A673 (cell line): ENCODE measurements at regions of chr6 and their contacts with region 1.

Region 1: DNA sequence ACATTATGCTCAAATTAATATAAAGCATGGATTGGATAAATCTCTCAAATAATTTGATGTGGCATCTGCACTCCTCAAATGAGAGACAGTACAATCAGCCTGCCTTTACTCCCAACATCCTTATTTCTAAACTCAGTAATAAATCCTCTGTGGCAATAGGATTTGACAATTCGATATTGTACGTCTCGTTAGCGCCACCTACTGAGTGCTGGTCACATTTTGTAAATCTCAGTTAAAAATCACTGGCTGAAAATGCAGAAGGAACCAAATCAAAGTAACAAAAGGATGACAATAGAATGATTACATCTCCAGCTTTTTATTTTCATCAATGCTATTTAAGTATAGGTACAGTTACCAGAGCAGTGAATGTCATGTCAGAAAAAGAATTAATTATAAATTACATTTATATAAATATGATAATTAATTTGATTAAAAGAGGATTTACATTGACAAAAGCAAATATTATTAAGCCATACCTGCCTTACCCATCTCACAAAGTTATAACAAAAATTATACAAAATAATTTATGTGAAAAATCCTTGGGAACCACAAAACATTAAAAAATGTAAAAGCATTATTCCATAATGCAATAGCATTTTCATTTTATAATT is 20.2 kb upstream of the GJE1 start:
- DNase-seq: peak; percentile 83
- H3K4me3 ChIP-seq: no peak overlapping the region
- H3K27ac ChIP-seq: no peak overlapping the region
- H3K4me1 ChIP-seq: peaks cover 12% of the 10 kb centered on the region
- H3K27me3 ChIP-seq: no peaks in the 10 kb centered on the region
- CTCF ChIP-seq: peak; percentile 87

Region 2: GRCh38 chr6:141641406-141641805 is 471.1 kb before region 1 on chr6:
- CTCF ChIA-PET with region 1: no interaction called
- POLR2A ChIA-PET with region 1: no interaction called
- intact Hi-C with region 1: loop called (anchors 2 kb)
- DNase-seq: no peak
- H3K4me3 ChIP-seq: no peak overlapping the region
- H3K27ac ChIP-seq: peak overlapping the region; percentile 80
- H3K4me1 ChIP-seq: peaks cover 53% of the 10 kb centered on the region
- H3K27me3 ChIP-seq: no peaks in the 10 kb centered on the region
- CTCF ChIP-seq: peak; percentile 51; the same call in 1 of the 2 replicates

Region 3: GRCh38 chr6:141677598-141678211 is 434.9 kb before region 1 on chr6:
- CTCF ChIA-PET with region 1: no interaction called
- POLR2A ChIA-PET with region 1: no interaction called
- intact Hi-C with region 1: loop called (anchors 2 kb)
- DNase-seq: peak; percentile 76
- H3K4me3 ChIP-seq: no peak overlapping the region
- H3K27ac ChIP-seq: no peak overlapping the region
- H3K4me1 ChIP-seq: peaks cover 22% of the 10 kb centered on the region
- H3K27me3 ChIP-seq: no peaks in the 10 kb centered on the region
- CTCF ChIP-seq: peak; percentile 72

Region 4: DNA sequence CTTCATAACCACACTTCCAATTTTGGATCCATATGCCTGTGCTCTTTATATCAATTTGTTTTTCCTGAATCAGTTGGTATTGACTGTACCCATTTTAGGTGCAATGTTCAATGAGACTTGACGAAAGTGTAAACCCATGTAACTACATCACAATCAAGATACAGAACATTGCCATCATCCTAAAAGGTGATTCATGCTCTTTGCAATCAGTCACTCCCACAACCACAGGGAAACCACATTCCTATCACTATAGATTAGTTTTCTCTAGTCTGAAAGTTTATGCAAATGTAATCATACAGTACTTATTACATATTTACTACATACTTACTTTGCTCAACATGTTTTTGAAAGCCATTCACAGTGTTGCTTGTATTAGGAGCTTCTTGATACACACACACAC is 356.7 kb after region 1 on chr6:
- CTCF ChIA-PET with region 1: no interaction called
- POLR2A ChIA-PET with region 1: no interaction called
- intact Hi-C with region 1: no loop called
- DNase-seq: no peak
- H3K4me3 ChIP-seq: no peak overlapping the region
- H3K27ac ChIP-seq: no peak overlapping the region
- H3K4me1 ChIP-seq: no peaks in the 10 kb centered on the region
- H3K27me3 ChIP-seq: no peaks in the 10 kb centered on the region
- CTCF ChIP-seq: no peak